ENCODE measurements at regions of chr11 and their contacts with region 1.

Region 1: GRCh38 chr11:61446211-61446651 is 16.3 kb downstream of the SDHAF2 start:
- DNase-seq: peak; percentile 89 to 90
- ATAC-seq: peak; percentile 75 to 92 (median 84)
- H3K4me3 ChIP-seq: no peak overlapping the region
- H3K27ac ChIP-seq: peak overlapping the region in 7 of 10 donors; percentile 14 to 84 (median 76)
- H3K4me1 ChIP-seq: peaks cover 13 to 46% (median 32%) of the 10 kb centered on the region in 9 donors
- H3K27me3 ChIP-seq: no peaks in the 10 kb centered on the region
- CTCF ChIP-seq: peak; percentile 69 to 91 (median 83)

Region 2: GRCh38 chr11:61509043-61510029 is 63.1 kb after region 1 on chr11:
- intact Hi-C with region 1: loop called in 3 of 10 experiments (anchors 5 to 10 kb)
- DNase-seq: peak; percentile 38 to 76
- ATAC-seq: peak; percentile 71 to 87 (median 80)
- H3K4me3 ChIP-seq: peak overlapping the region in 9 of 10 donors; percentile 10 to 49 (median 40)
- H3K27ac ChIP-seq: peak overlapping the region; percentile 10 to 78 (median 56)
- H3K4me1 ChIP-seq: peaks cover 0 to 24% (median 17%) of the 10 kb centered on the region in 9 donors
- H3K27me3 ChIP-seq: peaks cover 13 to 78% (median 62%) of the 10 kb centered on the region in 7 donors
- CTCF ChIP-seq: peak; percentile 34 to 77 (median 58)

Region 3: DNA sequence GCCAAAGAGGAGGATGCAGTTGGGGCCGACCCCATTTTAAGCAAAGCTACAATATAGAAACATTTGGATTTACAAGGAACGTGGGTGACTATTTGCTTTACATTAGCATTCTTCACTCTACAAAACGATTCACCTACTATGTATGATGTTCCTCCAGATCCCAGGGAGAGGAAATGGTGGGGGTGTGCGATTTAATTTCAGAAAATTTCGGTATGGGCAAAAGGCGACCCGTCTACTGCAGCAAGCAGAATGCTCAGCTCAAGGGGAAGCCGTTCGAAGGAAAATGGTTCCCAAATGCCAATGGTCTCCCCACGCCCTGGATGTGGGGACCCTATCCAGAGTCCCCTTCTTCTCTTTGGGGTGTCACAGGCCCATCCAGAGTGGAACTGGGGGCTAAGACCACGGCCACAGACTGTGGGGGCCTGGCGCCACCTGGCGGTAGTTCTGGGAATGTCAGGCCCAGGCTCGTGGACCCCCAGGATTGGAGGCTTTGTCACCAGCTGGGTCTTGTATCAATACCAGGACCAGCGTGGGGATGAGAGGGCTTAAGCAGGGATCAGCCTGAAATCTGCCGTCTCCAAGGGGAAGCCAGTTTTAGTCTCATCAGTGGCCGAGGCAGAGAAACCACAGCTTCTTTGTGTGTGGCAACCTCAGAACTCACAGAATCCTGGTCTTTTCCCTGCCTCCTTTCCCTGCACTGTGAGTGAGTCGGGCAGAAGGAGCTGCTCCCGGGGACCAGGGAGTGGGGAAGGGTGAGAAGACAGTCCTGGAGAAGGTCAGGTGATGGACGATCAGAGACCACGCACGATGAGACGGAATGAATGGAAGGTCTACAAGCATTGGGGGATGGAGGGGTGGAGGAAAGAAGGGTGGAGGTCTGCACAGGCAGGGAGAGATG is 70.7 kb after region 1 on chr11:
- intact Hi-C with region 1: loop called in 7 of 10 experiments (anchors 1 to 10 kb)
- DNase-seq: no peak
- ATAC-seq: peak; percentile 21 to 53 (median 31)
- H3K4me3 ChIP-seq: peak overlapping the region in 2 of 10 donors; percentile 11 to 24
- H3K27ac ChIP-seq: peak overlapping the region in 2 of 10 donors; percentile 15 to 56
- H3K4me1 ChIP-seq: peaks cover 0 to 9% (median 8%) of the 10 kb centered on the region in 9 donors
- H3K27me3 ChIP-seq: peaks cover 0 to 11% (median 7%) of the 10 kb centered on the region in 7 donors
- CTCF ChIP-seq: peak; percentile 93 to 98 (median 96)

Region 4: DNA sequence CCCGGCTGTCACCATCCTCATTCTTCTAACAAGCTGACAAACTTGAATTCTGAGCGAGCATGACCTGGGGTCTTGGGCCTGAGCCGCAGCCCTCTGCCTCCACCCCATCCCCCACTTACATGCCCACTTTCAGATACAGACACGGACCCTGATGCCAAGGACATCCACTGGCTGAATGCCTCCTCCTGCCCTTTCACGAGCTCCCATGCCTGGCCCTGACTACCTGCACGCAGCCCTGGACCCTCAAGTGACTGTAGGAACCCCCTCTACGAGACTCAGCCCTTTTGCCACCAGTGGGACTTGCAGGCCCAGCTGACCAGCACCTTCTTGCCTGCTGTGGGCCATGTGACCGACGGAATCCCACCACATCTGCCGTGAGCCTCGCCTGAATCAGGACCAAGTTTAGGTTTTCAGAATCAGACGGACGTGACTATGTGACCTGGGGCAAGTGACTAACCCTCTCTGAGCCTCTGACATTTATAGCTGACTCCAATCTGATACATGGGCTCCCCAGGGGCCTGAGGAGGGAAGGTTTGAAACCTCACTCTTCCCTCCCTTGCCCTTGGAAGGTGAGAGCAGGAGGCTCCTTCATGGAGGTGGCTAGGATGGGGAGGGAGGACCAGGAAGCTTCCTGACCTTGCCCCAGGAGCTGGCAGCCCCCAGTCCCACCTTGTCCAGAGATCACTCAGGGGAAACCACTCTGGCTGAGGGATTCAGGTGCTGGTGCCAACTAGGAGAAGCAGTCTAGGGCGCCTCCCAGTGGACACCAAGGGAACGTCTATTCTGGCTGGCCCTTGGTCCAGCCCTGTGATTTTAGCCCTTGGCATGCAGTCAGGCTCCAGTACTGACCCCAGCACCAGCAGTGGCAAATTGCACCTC is 181.6 kb after region 1 on chr11:
- intact Hi-C with region 1: loop called in 2 of 10 experiments (anchors 5 to 10 kb)
- DNase-seq: peak; percentile 74 to 77
- ATAC-seq: peak; percentile 71 to 93 (median 83)
- H3K4me3 ChIP-seq: no peak overlapping the region
- H3K27ac ChIP-seq: peak overlapping the region in 5 of 10 donors; percentile 7 to 90 (median 88)
- H3K4me1 ChIP-seq: peaks cover 0 to 27% (median 16%) of the 10 kb centered on the region in 9 donors
- H3K27me3 ChIP-seq: no peaks in the 10 kb centered on the region
- CTCF ChIP-seq: peak; percentile 61 to 93 (median 86)

Region 5: DNA sequence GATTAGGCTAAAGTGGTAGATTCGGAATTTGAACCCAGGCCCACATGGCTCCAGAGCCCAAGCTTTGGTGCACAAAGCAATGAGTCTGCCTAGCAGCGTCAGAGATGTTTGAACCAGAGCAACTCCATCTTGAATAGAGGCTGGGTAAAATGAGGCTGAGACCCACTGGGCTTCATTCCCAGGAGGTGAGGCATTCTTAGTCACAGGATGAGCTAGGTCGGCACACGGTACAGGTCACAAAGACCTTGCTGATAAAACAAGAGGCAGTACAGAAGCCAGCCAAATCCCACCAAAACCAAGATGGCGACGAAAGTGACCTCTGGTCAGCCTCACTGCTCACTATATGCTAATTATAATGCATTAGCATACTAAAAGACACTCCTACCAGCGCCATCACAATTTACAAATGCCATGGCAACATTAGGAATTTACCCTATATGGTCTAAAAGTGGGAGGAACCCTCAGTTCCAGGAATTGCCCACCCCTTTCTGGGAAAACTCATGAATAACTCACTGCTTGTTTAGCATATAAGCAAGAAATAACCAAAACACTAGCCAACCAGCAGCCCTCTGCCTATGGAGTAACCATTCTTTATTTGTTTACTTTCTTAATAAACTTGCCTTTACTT is 193.7 kb after region 1 on chr11:
- intact Hi-C with region 1: loop called in 4 of 10 experiments (anchors 5 to 10 kb)
- DNase-seq: no peak
- ATAC-seq: no peak
- H3K4me3 ChIP-seq: no peak overlapping the region
- H3K27ac ChIP-seq: no peak overlapping the region
- H3K4me1 ChIP-seq: no peaks in the 10 kb centered on the region
- H3K27me3 ChIP-seq: peaks cover 0 to 10% (median 0%) of the 10 kb centered on the region in 7 donors
- CTCF ChIP-seq: no peak